Naive thymus-derived CD4-positive, alpha-beta T cell (primary cell): ENCODE measurements at regions of chr14 and their contacts with region 1.

Region 1: GRCh38 chr14:103920981-103921854 is 7.0 kb upstream of the TDRD9 start:
- DNase-seq: peak; percentile 90 to 99 (median 96)
- ATAC-seq: peak; percentile 100
- H3K4me3 ChIP-seq: peak overlapping the region; percentile 100
- H3K4me3 Mint-ChIP-seq: peak overlapping the region; percentile 85 to 96 (median 90)
- H3K27ac ChIP-seq: peak overlapping the region; percentile 83
- H3K27ac Mint-ChIP-seq: peak overlapping the region; percentile 61 to 90 (median 83)
- H3K4me1 ChIP-seq: peaks cover 9 to 16% of the 10 kb centered on the region in 2 donors
- H3K4me1 Mint-ChIP-seq: peaks cover 0 to 37% (median 16%) of the 10 kb centered on the region in 7 donors
- H3K27me3 ChIP-seq: no peaks in the 10 kb centered on the region
- H3K27me3 Mint-ChIP-seq: peaks cover 4 to 14% (median 9%) of the 10 kb centered on the region in 5 donors

Region 2: DNA sequence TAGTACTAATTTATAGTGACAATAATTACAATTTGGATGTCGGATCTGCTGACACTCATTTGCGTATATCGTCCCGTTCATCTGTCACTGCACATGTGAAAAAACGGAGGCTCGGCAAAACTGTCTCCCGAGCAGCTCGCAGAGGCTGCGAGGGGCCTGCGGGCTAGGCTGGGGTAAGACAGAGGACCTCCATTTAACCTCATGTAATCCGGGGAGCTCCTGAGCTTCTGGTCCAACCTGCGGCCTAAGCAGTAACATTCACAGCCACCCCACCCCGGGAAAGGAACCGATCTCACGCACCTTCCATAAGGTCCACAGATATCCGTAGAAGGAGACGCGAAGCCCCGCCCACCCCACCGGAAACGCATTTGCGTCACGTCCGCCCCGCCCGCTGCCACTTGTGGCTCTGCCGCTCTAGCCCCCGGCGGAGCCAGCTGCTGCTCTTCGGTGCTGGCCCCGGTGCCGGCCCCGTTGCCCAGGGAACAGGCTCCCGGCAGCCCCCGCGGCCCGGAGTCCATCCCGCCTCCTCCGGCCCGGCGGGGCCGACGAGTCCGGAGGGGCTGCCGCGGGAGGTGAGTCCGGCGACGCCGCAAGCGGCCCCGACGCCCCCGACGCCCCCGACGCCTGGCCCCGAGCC is 1558.6 kb before region 1 on chr14 and contains the starts of genes CINP and TECPR2:
- CTCF ChIA-PET with region 1: no interaction called
- POLR2A ChIA-PET with region 1: no interaction called
- intact Hi-C with region 1: loop called in 1 of 2 experiments (anchors 5 kb)
- DNase-seq: peak; percentile 88 to 95 (median 92)
- ATAC-seq: peak; percentile 97
- H3K4me3 ChIP-seq: peak within 1 kb of the TSS; percentile 96
- H3K4me3 Mint-ChIP-seq: peak within 1 kb of the TSS in 6 of 10 donors; percentile 92 to 97 (median 95)
- H3K27ac ChIP-seq: peak within 1 kb of the TSS; percentile 87
- H3K27ac Mint-ChIP-seq: peak within 1 kb of the TSS; percentile 82 to 99 (median 96)
- H3K4me1 ChIP-seq: peaks cover 6 to 15% of the 10 kb centered on the region in 2 donors
- H3K4me1 Mint-ChIP-seq: peaks cover 17 to 42% (median 36%) of the 10 kb centered on the region in 7 donors
- H3K27me3 ChIP-seq: no peaks in the 10 kb centered on the region
- H3K27me3 Mint-ChIP-seq: no peaks in the 10 kb centered on the region
- total RNA-seq, gene CINP: 16.8 to 34.4 (median 31.8) TPM
- total RNA-seq, gene TECPR2: 8.7 to 12.9 (median 11.4) TPM

Region 3: GRCh38 chr14:103528587-103529382 is 392.4 kb before region 1 on chr14 and contains the start of gene TRMT61A:
- CTCF ChIA-PET with region 1: no interaction called
- POLR2A ChIA-PET with region 1: no interaction called
- intact Hi-C with region 1: loop called in 1 of 2 experiments (anchors 5 kb)
- DNase-seq: peak; percentile 58 to 80 (median 74)
- ATAC-seq: peak; percentile 85
- H3K4me3 ChIP-seq: peak within 1 kb of the TSS; percentile 96
- H3K4me3 Mint-ChIP-seq: peak within 1 kb of the TSS; percentile 89 to 97 (median 95)
- H3K27ac ChIP-seq: peak within 1 kb of the TSS; percentile 81
- H3K27ac Mint-ChIP-seq: peak within 1 kb of the TSS; percentile 91 to 98 (median 96)
- H3K4me1 ChIP-seq: peaks cover 19 to 21% of the 10 kb centered on the region in 2 donors
- H3K4me1 Mint-ChIP-seq: peaks cover 30 to 39% (median 35%) of the 10 kb centered on the region in 7 donors
- H3K27me3 ChIP-seq: no peaks in the 10 kb centered on the region
- H3K27me3 Mint-ChIP-seq: peaks cover 0 to 21% (median 1%) of the 10 kb centered on the region in 5 donors
- total RNA-seq, gene TRMT61A: 9.8 to 15.1 (median 14.1) TPM

Region 4: DNA sequence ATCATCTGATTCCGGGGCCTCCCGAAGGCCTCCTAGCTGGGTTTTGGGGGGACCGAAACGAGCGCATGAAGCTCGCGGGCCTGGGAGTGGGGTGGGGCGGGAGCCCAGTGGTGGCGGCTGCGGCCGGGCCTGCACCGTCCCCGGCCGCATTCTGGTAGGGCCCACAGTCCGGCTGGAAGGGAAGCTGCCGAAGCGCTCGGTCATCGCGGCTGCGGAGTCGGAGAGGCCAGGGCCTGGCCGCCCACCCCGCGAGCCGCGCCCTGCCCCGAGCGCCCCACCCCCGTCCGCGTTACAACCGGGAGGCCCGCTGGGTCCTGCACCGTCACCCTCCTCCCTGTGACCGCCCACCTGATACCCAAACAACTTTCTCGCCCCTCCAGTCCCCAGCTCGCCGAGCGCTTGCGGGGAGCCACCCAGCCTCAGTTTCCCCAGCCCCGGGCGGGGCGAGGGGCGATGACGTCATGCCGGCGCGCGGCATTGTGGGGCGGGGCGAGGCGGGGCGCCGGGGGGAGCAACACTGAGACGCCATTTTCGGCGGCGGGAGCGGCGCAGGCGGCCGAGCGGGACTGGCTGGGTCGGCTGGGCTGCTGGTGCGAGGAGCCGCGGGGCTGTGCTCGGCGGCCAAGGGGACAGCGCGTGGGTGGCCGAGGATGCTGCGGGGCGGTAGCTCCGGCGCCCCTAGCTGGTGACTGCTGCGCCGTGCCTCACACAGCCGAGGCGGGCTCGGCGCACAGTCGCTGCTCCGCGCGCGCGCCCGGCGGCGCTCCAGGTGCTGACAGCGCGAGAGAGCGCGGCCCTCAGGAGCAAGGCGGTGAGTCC is 292.3 kb before region 1 on chr14 and contains the start of gene KLC1:
- CTCF ChIA-PET with region 1: no interaction called
- POLR2A ChIA-PET with region 1: no interaction called
- intact Hi-C with region 1: loop called in 1 of 2 experiments (anchors 2 kb)
- DNase-seq: peak; percentile 71 to 93 (median 84)
- ATAC-seq: peak; percentile 87
- H3K4me3 ChIP-seq: peak within 1 kb of the TSS; percentile 78
- H3K4me3 Mint-ChIP-seq: peak within 1 kb of the TSS; percentile 74 to 91 (median 88)
- H3K27ac ChIP-seq: peak within 1 kb of the TSS; percentile 98
- H3K27ac Mint-ChIP-seq: peak within 1 kb of the TSS; percentile 60 to 93 (median 88)
- H3K4me1 ChIP-seq: peaks cover 18 to 29% of the 10 kb centered on the region in 2 donors
- H3K4me1 Mint-ChIP-seq: peaks cover 23 to 64% (median 38%) of the 10 kb centered on the region in 7 donors
- H3K27me3 ChIP-seq: no peaks in the 10 kb centered on the region
- H3K27me3 Mint-ChIP-seq: no peaks in the 10 kb centered on the region
- total RNA-seq, gene KLC1: 150 to 268 (median 174) TPM

Region 5: DNA sequence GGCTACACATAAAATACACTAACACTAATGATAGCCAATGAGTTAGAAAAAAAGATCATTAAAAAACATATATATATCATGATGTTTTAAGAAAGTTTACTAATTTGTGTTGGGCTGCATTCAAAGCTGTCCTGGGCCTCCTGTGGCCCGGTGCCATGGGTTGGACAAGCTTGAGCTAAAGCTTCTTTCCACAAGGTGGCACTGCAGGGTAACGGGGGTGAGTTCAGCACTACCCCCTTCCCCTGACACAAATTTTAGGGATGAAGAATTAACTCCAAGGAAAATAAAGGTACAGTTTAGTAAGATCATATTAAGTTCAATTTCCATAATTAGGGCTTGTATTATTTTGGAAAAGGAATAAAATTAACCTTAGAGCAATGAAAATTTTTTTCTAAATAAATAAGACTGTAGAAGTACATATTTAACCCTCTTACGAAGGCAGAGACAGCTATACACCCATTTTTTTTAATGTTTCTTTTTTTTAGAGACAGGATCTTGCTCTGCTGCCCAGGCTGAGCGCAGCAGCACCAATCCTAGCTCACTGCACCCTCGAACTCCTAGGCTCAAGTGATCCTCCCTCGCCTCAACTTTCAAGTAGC is 112.7 kb before region 1 on chr14:
- CTCF ChIA-PET with region 1: interaction called, 11 read pairs
- POLR2A ChIA-PET with region 1: interaction called, 4 read pairs
- intact Hi-C with region 1: no loop called
- DNase-seq: peak; percentile 20 to 71 (median 63)
- ATAC-seq: peak; percentile 82
- H3K4me3 ChIP-seq: no peak overlapping the region
- H3K4me3 Mint-ChIP-seq: no peak overlapping the region
- H3K27ac ChIP-seq: no peak overlapping the region
- H3K27ac Mint-ChIP-seq: no peak overlapping the region
- H3K4me1 ChIP-seq: no peaks in the 10 kb centered on the region
- H3K4me1 Mint-ChIP-seq: peaks cover 3 to 18% (median 6%) of the 10 kb centered on the region in 7 donors
- H3K27me3 ChIP-seq: no peaks in the 10 kb centered on the region
- H3K27me3 Mint-ChIP-seq: no peaks in the 10 kb centered on the region

Region 6: GRCh38 chr14:103871596-103872480 is 49.4 kb before region 1 on chr14:
- CTCF ChIA-PET with region 1: no interaction called
- POLR2A ChIA-PET with region 1: no interaction called
- intact Hi-C with region 1: loop called (anchors 1 kb)
- DNase-seq: peak; percentile 51 to 87 (median 67)
- ATAC-seq: peak; percentile 90
- H3K4me3 ChIP-seq: peak overlapping the region; percentile 70
- H3K4me3 Mint-ChIP-seq: peak overlapping the region; percentile 77 to 90 (median 83)
- H3K27ac ChIP-seq: peak overlapping the region; percentile 70
- H3K27ac Mint-ChIP-seq: peak overlapping the region; percentile 66 to 93 (median 78)
- H3K4me1 ChIP-seq: peaks cover 5 to 9% of the 10 kb centered on the region in 2 donors
- H3K4me1 Mint-ChIP-seq: peaks cover 10 to 15% (median 12%) of the 10 kb centered on the region in 7 donors
- H3K27me3 ChIP-seq: no peaks in the 10 kb centered on the region
- H3K27me3 Mint-ChIP-seq: no peaks in the 10 kb centered on the region